Esophagus muscularis mucosa (tissue), 4 donors: ENCODE measurements at regions of chr12 and their contacts with region 1.

Region 1: GRCh38 chr12:1603269-1603993 is 9.1 kb upstream of the FBXL14 start:
- DNase-seq: no peak
- H3K4me3 ChIP-seq: no peak overlapping the region
- H3K27ac ChIP-seq: peak overlapping the region in 1 of 4 donors; percentile 6
- H3K4me1 ChIP-seq: peaks cover 22 to 45% (median 33%) of the 10 kb centered on the region in 4 donors
- H3K27me3 ChIP-seq: no peaks in the 10 kb centered on the region
- CTCF ChIP-seq: no peak
- EP300 ChIP-seq: no peak
- POLR2A ChIP-seq: no peak

Region 2: DNA sequence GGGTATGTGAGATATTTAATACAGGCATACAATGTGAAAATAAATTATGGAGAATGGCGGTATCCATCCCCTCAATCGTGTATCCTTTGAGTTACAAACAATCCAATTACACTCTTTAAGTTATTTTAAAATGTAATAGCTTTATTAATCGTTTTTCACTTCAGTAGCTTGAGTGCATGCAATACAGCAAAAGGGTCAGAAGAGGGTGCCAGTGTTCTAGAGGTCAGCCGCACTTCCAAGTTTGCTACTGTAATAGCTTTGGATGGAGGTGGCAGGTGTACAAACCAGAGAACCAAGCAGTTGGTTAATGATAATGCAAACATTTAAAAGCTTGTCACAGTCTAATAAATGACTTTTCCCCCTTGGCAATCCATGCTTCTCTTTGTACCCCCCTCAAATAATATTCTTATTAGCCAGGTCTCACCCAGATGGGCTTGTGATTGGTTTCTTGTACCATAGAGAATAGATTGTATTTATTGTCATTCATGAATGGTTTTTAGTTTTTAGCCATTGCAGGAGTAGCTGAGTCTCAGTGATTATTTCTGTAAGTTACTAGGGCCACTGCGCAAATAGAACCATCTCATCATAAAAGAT is 485.4 kb before region 1 on chr12:
- intact Hi-C with region 1: loop called (anchors 5 kb)
- DNase-seq: no peak
- H3K4me3 ChIP-seq: no peak overlapping the region
- H3K27ac ChIP-seq: no peak overlapping the region
- H3K4me1 ChIP-seq: peaks cover 0 to 6% (median 1%) of the 10 kb centered on the region in 4 donors
- H3K27me3 ChIP-seq: no peaks in the 10 kb centered on the region
- CTCF ChIP-seq: peak; percentile 92 to 95 (median 93)
- EP300 ChIP-seq: no peak
- POLR2A ChIP-seq: no peak